IMR-90 (cell line): ENCODE measurements at regions of chr16 and their contacts with region 1.

Region 1: DNA sequence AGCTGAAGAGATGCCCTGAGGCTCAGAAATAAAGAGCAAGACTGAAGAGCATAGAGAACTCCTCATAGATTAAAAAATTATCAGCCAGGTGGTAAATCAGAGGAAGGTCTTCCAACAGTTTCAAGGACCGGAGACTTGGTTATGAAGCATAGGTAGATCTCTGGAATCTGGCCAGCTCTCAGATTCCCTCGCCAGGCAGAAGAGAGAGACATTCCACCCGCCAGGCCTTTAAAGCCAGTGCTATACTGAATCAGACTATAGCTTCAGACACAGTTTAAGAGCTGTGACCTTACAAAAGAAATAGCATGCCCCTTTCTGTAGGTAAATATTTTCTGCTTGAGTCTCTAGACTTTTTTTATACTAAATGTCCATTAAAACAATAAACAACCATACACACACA is 70.3 kb downstream of the NFATC3 start:
- DNase-seq: no peak
- ATAC-seq: no peak
- H3K4me3 ChIP-seq: no peak overlapping the region
- H3K27ac ChIP-seq: no peak overlapping the region
- H3K4me1 ChIP-seq: no peaks in the 10 kb centered on the region
- H3K27me3 ChIP-seq: no peaks in the 10 kb centered on the region
- CTCF ChIP-seq: no peak
- POLR2A ChIP-seq: no peak
- RAD21 ChIP-seq: no peak

Region 2: DNA sequence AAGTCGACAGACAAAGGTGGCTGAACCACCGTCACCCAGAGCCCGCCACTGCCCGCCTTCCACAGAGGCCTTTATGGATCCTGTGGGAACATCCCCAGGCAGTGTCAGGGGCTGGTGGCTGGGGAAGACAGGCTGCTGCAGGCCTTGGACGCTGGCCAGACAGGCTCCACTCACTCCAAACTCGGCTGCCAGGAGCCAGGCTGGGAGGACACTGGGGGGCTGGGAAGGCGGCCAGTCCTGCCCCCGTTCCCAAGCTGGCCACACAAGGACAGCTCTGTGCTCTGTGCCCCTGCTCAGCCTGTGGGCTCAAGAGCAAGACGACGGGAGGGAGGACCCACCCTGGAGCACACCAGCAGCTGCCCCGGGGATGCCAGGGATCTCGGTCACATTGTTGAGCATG is 203.9 kb before region 1 on chr16:
- CTCF ChIA-PET with region 1: no interaction called
- POLR2A ChIA-PET with region 1: no interaction called
- dilution Hi-C with region 1: no loop called
- in situ Hi-C with region 1: no loop called
- intact Hi-C with region 1: no loop called
- DNase-seq: no peak
- ATAC-seq: no peak; the same call in 1 of the 2 replicates
- H3K4me3 ChIP-seq: no peak overlapping the region
- H3K27ac ChIP-seq: no peak overlapping the region
- H3K4me1 ChIP-seq: peaks cover 3% of the 10 kb centered on the region; the same call in 1 of the 2 replicates
- H3K27me3 ChIP-seq: no peaks in the 10 kb centered on the region
- CTCF ChIP-seq: no peak
- POLR2A ChIP-seq: no peak
- RAD21 ChIP-seq: no peak

Region 3: GRCh38 chr16:68200088-68200783 is 44.8 kb after region 1 on chr16:
- CTCF ChIA-PET with region 1: no interaction called
- POLR2A ChIA-PET with region 1: no interaction called
- dilution Hi-C with region 1: no loop called
- in situ Hi-C with region 1: no loop called
- intact Hi-C with region 1: loop called (anchors 5 kb)
- DNase-seq: peak; percentile 71
- ATAC-seq: peak; percentile 55
- H3K4me3 ChIP-seq: no peak overlapping the region
- H3K27ac ChIP-seq: no peak overlapping the region
- H3K4me1 ChIP-seq: peaks cover 6% of the 10 kb centered on the region
- H3K27me3 ChIP-seq: no peaks in the 10 kb centered on the region
- CTCF ChIP-seq: no peak
- POLR2A ChIP-seq: no peak
- RAD21 ChIP-seq: no peak